Dendritic cell treated with granulocyte-macrophage colony-stimulating factor and Interleukin-4, amounts not matched to agents 40 ng/mL and 50 ng/mL, for 4 days (primary cell): ENCODE measurements at regions of chr1 and their contacts with region 1.

Region 1: GRCh38 chr1:109579491-109579890 is 31.1 kb downstream of the GNAI3 start:
- H3K4me3 Mint-ChIP-seq: no peak overlapping the region
- H3K27ac Mint-ChIP-seq: no peak overlapping the region
- H3K4me1 Mint-ChIP-seq: peaks cover 27% of the 10 kb centered on the region
- H3K27me3 Mint-ChIP-seq: no peaks in the 10 kb centered on the region

Region 2: DNA sequence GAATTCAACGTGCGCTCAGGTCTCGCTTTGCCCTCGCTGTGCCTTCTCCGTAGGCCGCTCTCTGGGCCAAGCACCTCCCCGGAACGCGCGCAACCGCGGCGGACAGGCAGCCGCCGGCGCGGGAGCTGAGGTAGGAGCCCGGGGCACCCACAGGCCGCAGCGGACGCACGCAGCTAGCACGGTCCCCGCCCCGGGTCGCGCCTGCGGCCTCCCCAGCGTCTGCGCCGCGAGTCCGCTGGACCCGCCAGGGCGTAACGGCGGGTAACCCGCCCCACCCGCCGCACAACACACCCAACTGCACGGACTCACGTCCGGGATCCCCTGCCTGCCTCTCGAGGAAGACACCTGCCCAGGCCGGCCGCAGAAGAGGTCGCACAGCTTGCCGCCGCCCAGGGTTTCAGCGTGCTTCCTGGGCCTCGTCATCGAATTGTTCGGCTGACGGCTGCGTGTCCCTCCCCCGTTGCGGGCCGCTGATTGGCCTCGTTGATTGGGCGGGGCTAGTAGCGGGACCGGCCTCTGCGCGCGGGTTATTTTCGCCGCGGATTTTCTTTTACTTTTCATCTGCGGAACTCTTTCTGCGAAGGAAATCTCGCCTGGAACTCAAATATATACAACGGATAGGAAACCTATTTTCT is 616.3 kb before region 1 on chr1 and contains the start of gene CLCC1:
- intact Hi-C with region 1: no loop called
- H3K4me3 Mint-ChIP-seq: peak within 1 kb of the TSS; percentile 94
- H3K27ac Mint-ChIP-seq: peak within 1 kb of the TSS; percentile 97
- H3K4me1 Mint-ChIP-seq: peaks cover 29% of the 10 kb centered on the region
- H3K27me3 Mint-ChIP-seq: no peaks in the 10 kb centered on the region

Region 3: GRCh38 chr1:109598655-109599054 is 19.2 kb after region 1 on chr1:
- intact Hi-C with region 1: loop called (anchors 2 kb)
- H3K4me3 Mint-ChIP-seq: no peak overlapping the region
- H3K27ac Mint-ChIP-seq: no peak overlapping the region
- H3K4me1 Mint-ChIP-seq: no peaks in the 10 kb centered on the region
- H3K27me3 Mint-ChIP-seq: no peaks in the 10 kb centered on the region

Region 4: GRCh38 chr1:109620841-109621286 is 41.4 kb after region 1 on chr1:
- intact Hi-C with region 1: no loop called
- H3K4me3 Mint-ChIP-seq: peak overlapping the region; percentile 94
- H3K27ac Mint-ChIP-seq: peak overlapping the region; percentile 91
- H3K4me1 Mint-ChIP-seq: peaks cover 94% of the 10 kb centered on the region
- H3K27me3 Mint-ChIP-seq: no peaks in the 10 kb centered on the region